ENCODE measurements at regions of chr3 and their contacts with region 1.

Region 1: DNA sequence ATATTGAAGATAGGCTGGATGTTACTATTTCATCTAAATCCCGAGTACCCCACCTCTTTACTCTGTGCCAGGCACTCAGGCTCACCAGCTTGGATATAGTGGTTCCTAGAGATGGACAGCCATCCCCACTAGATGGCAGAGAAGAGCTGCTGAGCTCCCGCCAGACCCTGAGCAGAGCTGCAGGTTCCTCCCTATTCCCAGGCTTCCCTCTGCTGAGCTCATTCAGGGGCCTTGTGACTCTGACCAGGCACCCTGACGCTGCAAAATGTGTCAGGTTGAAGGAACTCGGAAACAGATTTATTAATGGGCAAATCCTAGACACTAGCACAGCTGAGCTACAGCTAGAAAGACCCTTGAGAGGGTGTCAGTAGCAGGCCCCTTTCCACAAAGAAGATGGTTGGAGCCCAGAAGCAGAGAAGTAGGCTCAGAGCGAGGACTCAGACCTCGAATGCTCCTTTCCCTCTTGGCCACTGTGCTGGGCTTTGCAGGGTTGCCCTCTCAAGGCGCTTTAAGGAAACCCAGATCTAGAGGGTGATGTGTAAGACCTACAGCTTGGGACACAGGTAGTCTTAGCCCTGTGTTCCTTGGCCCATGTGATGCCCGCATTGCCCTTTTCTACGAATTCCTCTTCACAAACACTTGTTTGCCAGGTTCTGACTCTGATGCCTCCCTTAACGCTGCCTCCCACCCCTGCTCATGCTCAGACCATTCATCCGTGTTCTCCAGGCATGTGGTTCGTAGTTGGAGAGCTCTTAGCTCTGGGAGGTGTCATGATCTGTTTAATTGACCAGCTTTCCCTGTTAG is 38.0 kb upstream of the RHO start:
- DNase-seq: peak; percentile 88 to 95 (median 93)
- H3K4me3 ChIP-seq: no peak overlapping the region
- H3K27ac ChIP-seq: peak overlapping the region in 4 of 5 donors; percentile 63 to 91 (median 84)
- H3K4me1 ChIP-seq: peaks cover 28 to 36% of the 10 kb centered on the region in 2 donors
- H3K27me3 ChIP-seq: no peaks in the 10 kb centered on the region
- CTCF ChIP-seq: peak; percentile 76 to 93 (median 90)
- POLR2A ChIP-seq: peak in 1 of 2 donors; percentile 28

Region 2: DNA sequence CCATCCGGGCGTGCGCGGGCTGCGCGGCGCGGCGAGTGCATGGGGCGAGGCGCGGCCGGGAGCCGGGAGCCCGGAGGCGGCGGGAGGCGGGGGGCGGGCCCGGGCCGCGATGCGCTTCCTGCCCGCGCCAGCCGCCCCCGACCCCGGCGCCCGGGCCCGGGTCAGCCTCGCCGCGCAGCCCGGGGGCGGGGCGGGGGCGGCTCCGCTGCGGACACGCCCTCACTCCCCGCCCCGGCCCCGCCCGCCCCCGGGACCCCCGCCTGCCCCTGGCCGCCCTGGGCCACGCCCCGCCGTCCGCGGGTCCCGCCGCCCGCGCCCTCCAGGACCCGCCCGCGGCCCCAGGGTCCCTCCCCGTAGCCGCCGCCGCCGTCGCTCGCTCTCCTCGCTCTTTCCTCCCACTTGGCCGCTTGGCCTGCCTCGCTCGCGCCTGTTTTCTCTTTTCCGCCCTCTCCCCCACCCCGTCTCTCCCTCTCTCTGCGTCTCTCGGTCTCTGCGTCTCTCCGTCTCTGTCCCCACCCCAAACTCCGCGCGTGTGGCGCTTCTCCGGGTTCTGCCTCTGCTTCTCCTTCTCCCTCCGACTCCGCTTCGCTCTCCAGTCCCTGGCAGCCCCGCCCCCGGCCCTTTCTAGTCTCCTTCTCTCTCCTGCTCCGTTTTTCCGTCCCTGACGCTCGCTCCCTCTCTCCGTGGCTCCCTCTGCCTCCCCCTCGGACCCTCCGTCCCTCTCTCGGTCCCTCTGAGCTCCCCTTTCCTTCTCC is 116.4 kb after region 1 on chr3 and contains the start of gene PLXND1:
- intact Hi-C with region 1: loop called (anchors 5 kb)
- DNase-seq: peak; percentile 65 to 80 (median 68)
- H3K4me3 ChIP-seq: peak within 1 kb of the TSS; percentile 3 to 82 (median 21)
- H3K27ac ChIP-seq: peak within 1 kb of the TSS; percentile 53 to 92 (median 82)
- H3K4me1 ChIP-seq: peaks cover 17 to 48% of the 10 kb centered on the region in 2 donors
- H3K27me3 ChIP-seq: no peaks in the 10 kb centered on the region
- CTCF ChIP-seq: no peak
- POLR2A ChIP-seq: peak in 1 of 2 donors; percentile 25
- total RNA-seq, gene PLXND1: 54.8 to 191 (median 146) TPM